Mammary epithelial cell (primary cell): ENCODE measurements at regions of chr3 and their contacts with region 1.

Region 1: DNA sequence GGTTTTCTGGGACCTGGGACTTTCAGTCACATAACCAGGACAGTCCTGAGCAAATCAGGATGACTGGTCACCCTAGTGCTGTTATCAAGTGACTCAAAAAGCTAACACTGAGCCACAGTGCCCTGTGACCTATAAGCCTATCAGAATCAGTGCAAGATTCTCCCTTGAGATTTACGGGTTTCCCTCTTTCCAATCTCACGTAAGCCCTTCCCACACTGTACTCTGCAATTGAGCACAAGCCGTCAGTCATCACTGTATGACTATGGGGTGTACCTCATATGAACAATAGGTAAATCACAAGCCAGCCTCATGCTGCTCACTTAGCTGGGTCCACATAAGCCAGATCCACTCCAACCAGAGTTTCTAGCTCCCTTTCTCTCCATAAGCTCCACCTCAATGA is 21.0 kb upstream of the CLDN18 start:
- DNase-seq: no peak
- H3K4me3 ChIP-seq: no peak overlapping the region
- H3K27ac ChIP-seq: no peak overlapping the region
- H3K4me1 ChIP-seq: no peaks in the 10 kb centered on the region
- H3K27me3 ChIP-seq: peaks cover 2% of the 10 kb centered on the region
- CTCF ChIP-seq: no peak

Region 2: GRCh38 chr3:138125548-138126221 is 136.7 kb after region 1 on chr3:
- CTCF ChIA-PET with region 1: no interaction called
- dilution Hi-C with region 1: loop called (anchors 10 kb)
- in situ Hi-C with region 1: no loop called
- intact Hi-C with region 1: no loop called
- DNase-seq: peak; percentile 27
- H3K4me3 ChIP-seq: no peak overlapping the region
- H3K27ac ChIP-seq: no peak overlapping the region
- H3K4me1 ChIP-seq: peaks cover 15% of the 10 kb centered on the region
- H3K27me3 ChIP-seq: no peaks in the 10 kb centered on the region
- CTCF ChIP-seq: no peak

Region 3: GRCh38 chr3:138227650-138228049 is 238.7 kb after region 1 on chr3:
- CTCF ChIA-PET with region 1: no interaction called
- dilution Hi-C with region 1: no loop called
- in situ Hi-C with region 1: no loop called
- intact Hi-C with region 1: no loop called
- DNase-seq: no peak
- H3K4me3 ChIP-seq: no peak overlapping the region
- H3K27ac ChIP-seq: no peak overlapping the region
- H3K4me1 ChIP-seq: no peaks in the 10 kb centered on the region
- H3K27me3 ChIP-seq: no peaks in the 10 kb centered on the region
- CTCF ChIP-seq: no peak